Left ventricle myocardium inferior (tissue), 1 donor: ENCODE measurements at regions of chr1 and their contacts with region 1.

Region 1: DNA sequence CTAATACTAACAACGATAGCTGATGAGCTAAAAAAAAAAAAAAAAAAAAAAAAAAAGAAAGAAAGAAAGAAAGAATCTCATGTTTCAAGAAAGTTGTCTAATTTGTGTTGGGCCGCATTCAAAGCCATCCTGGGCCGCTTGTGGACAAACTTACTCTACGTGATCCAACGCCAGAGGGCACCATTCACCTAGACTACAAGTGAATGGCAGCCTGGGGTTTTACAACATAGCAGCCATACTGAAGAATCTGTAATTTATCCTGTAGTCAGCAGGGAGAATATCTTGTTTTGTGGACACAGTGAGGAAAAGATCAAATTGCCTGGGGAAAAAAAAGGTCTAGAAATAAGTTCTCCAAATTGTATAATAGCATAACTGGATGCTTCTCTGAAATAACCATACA is 47.0 kb downstream of the CYP2J2 start:
- DNase-seq: peak; percentile 46
- H3K4me3 ChIP-seq: no peak overlapping the region
- H3K27ac ChIP-seq: no peak overlapping the region
- H3K4me1 ChIP-seq: peaks cover 5% of the 10 kb centered on the region
- H3K27me3 ChIP-seq: no peaks in the 10 kb centered on the region
- CTCF ChIP-seq: peak; percentile 66

Region 2: GRCh38 chr1:59803458-59804038 is 76.0 kb before region 1 on chr1:
- intact Hi-C with region 1: no loop called
- DNase-seq: no peak
- H3K4me3 ChIP-seq: no peak overlapping the region
- H3K27ac ChIP-seq: no peak overlapping the region
- H3K4me1 ChIP-seq: no peaks in the 10 kb centered on the region
- H3K27me3 ChIP-seq: no peaks in the 10 kb centered on the region
- CTCF ChIP-seq: no peak

Region 3: DNA sequence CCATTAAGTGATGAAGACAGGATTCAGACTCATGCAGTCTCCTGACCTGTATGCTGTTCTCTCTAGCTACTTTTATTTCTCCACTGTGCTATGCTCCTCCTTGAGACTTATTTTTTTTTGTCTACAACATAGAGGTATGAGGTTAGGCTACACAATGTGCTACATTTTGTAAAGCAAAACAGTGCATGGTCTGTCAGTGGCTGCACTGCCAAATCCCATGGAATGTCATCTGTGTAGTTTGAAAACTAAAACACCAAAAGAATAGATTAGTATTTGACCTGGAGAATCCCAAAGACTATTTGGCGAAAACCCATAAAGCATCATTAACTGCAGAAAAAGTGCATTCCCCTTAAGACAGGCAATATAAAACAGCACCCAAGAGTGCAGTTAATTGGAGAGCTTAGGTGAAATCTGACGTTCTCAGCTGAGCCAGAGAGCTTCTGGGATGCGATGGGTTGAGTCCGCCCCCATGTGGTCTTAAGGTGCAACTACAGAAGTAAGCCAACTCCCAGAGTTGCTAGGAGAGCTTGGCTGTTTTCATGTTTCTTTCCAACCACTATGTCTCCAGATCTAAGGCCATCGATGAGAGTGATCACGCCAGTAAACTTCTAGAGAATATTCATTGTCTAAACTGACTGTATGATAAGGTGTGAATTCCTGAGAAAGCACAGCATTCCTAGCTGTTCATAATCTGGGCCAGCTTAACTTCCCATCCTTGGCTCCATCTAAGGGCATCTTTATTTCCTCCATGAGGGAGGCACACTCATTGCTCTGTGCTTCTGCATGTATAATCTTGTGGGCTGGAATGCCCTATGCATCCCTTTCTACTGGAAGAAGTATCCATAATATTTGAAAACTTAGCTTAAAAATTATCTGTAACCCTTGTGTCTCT is 67.7 kb after region 1 on chr1:
- intact Hi-C with region 1: loop called (anchors 2 kb)
- DNase-seq: no peak
- H3K4me3 ChIP-seq: no peak overlapping the region
- H3K27ac ChIP-seq: no peak overlapping the region
- H3K4me1 ChIP-seq: peaks cover 11% of the 10 kb centered on the region
- H3K27me3 ChIP-seq: no peaks in the 10 kb centered on the region
- CTCF ChIP-seq: peak; percentile 95